ENCODE measurements at regions of chrX and their contacts with region 1.

Region 1: DNA sequence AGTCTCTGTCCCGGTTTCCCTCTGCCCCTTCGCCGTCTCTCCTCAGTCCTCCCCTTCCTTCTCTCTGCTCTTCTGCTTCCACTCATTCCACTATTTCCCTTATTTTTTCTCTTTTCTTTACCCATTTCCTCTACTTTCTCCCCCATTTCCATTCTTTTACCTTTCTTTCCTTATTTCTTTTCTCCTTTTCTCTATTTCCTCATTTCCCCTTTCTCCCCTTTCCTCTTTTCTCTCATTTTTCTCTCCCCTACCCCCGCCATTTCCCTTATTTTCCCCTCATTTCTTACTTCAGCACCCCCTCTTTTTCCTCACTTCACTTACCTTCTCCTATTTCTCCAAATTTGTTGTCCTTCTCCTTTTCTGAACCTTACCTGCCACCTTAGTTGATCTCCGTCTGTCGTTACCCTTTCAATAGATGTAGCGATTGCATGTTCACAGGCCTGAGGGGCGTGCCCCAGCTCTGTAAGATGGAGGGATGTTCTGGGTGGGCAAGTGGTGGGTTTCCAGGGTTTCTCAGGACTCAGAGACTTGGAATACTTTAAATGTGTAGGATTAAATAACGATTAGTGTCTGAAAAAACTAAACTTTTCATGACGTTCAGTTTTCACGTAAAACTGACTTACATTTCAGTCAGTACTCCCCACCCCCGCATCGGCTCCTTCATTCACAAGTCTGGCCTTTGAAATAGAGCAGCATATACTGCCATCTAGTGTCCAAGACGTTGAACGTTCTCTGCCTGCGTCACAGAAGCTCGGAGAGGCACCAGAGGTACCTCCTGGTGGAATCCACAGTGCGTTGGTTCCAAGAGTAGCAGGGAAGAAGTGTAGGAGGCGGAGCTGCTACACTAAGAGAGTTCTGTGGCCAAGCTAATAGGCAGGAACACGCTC is 641 bp upstream of the NCBP2L start:
- DNase-seq: peak; percentile 67 to 77 (median 74)
- ATAC-seq: peak; percentile 75 to 87 (median 78)
- H3K4me3 ChIP-seq: peak overlapping the region; percentile 48 to 67 (median 65)
- H3K27ac ChIP-seq: peak overlapping the region in 2 of 3 donors; percentile 63 to 73
- H3K4me1 ChIP-seq: no peaks in the 10 kb centered on the region
- H3K27me3 ChIP-seq: peaks cover 0 to 3% of the 10 kb centered on the region in 2 donors
- CTCF ChIP-seq: peak; percentile 80 to 90 (median 87)
- POLR2A ChIP-seq: no peak

Region 2: DNA sequence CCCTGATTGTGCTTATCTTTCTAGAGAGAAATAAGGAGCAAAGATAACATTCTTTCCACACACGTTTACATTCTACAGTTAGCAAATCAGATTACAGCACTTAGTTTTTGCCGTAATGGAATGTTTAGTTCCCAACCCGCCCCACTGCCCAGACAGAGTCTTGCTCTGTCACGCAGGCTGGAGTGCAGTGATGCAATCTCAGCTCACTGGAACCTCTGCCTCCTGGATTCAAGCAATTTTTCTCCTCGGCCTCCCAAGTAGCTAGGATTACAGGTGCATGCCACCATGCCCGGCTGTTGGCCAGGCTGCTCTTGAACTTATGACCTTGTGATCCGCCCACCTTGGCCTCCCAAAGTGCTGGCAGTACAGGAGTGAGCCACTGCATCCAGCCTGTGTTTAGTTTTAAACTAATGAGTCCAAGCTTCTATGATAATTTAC is 157.0 kb before region 1 on chrX:
- intact Hi-C with region 1: no loop called
- DNase-seq: no peak
- ATAC-seq: no peak
- H3K4me3 ChIP-seq: no peak overlapping the region
- H3K27ac ChIP-seq: no peak overlapping the region
- H3K4me1 ChIP-seq: no peaks in the 10 kb centered on the region
- H3K27me3 ChIP-seq: no peaks in the 10 kb centered on the region
- CTCF ChIP-seq: no peak
- POLR2A ChIP-seq: no peak

Region 3: GRCh38 chrX:107654872-107655761 is 121.8 kb before region 1 on chrX:
- intact Hi-C with region 1: loop called (anchors 10 kb)
- DNase-seq: peak; percentile 45 to 67 (median 51)
- ATAC-seq: peak; percentile 67 to 70 (median 68)
- H3K4me3 ChIP-seq: no peak overlapping the region
- H3K27ac ChIP-seq: no peak overlapping the region
- H3K4me1 ChIP-seq: no peaks in the 10 kb centered on the region
- H3K27me3 ChIP-seq: no peaks in the 10 kb centered on the region
- CTCF ChIP-seq: peak; percentile 37 to 57 (median 54)
- POLR2A ChIP-seq: no peak

Region 4: GRCh38 chrX:107716816-107717700 is 59.8 kb before region 1 on chrX:
- intact Hi-C with region 1: loop called in 1 of 2 experiments (anchors 10 kb)
- DNase-seq: peak; percentile 85 to 90 (median 90)
- ATAC-seq: peak; percentile 68 to 77 (median 75)
- H3K4me3 ChIP-seq: peak overlapping the region; percentile 50 to 65 (median 58)
- H3K27ac ChIP-seq: peak overlapping the region; percentile 76 to 91 (median 86)
- H3K4me1 ChIP-seq: peaks cover 0 to 17% (median 4%) of the 10 kb centered on the region in 4 donors
- H3K27me3 ChIP-seq: no peaks in the 10 kb centered on the region
- CTCF ChIP-seq: no peak
- POLR2A ChIP-seq: peak; percentile 98

Region 5: DNA sequence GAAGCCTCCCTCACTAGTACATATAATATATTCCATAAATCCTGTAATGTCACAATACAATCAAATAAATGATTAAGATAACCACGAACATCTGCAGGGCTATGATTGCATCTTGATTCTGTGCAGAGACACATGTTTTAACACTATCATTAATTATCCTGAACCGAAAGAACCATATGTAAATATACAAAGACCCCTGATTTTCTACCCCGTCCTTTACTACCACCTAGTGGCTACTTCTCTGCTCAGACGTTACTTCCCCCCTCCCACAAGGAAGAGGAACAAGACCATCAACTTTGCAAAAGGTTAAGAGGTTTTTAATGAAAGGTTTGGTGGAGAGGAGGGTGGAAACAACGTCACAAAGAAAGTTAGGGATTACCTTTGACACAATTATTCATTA is 527.3 kb after region 1 on chrX:
- intact Hi-C with region 1: no loop called
- DNase-seq: no peak
- ATAC-seq: no peak
- H3K4me3 ChIP-seq: no peak overlapping the region
- H3K27ac ChIP-seq: no peak overlapping the region
- H3K4me1 ChIP-seq: no peaks in the 10 kb centered on the region
- H3K27me3 ChIP-seq: no peaks in the 10 kb centered on the region
- CTCF ChIP-seq: peak; percentile 20 to 44 (median 28)
- POLR2A ChIP-seq: no peak